ENCODE measurements at regions of chr1 and their contacts with region 1.

Region 1: DNA sequence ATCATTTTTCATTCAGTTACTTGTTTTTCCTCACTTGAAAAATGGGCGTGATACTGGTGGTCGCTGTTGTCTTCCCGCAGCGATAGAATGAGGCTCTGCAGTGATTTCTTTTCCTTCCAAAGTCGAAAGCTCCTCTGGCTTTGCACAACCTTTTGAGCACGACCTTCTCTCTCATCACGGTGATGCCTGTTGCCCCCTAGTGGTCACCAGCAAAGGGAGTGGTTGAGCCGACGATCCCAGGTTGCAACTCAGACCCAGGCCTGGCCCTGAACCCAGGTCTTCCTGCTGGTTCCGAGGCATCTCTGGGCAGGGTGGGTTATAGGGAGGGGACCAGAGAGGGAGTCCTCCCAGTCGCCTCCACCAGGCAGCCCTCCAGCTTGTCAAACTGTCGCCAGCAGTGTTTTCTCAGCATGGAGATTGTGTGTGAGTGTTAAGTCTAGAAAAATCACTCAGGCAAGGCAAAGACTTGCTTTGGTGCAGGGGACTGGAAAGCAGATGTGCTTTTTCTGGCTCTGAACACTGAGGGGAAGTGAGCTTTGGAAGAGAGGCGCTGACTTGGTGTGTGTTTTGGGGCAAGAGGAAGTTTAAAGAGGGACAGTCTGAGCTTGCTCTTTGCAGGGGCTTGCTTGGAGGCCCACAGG is 285.3 kb downstream of the CAMTA1 start:
- DNase-seq: peak; percentile 42 to 66
- ATAC-seq: peak; percentile 71 to 92 (median 84)
- H3K4me3 ChIP-seq: peak overlapping the region in 9 of 10 donors; percentile 17 to 53 (median 42)
- H3K27ac ChIP-seq: no peak overlapping the region
- H3K4me1 ChIP-seq: peaks cover 0 to 9% (median 7%) of the 10 kb centered on the region in 9 donors
- H3K27me3 ChIP-seq: peaks cover 0 to 11% (median 0%) of the 10 kb centered on the region in 7 donors
- CTCF ChIP-seq: peak; percentile 70 to 90 (median 84)

Region 2: DNA sequence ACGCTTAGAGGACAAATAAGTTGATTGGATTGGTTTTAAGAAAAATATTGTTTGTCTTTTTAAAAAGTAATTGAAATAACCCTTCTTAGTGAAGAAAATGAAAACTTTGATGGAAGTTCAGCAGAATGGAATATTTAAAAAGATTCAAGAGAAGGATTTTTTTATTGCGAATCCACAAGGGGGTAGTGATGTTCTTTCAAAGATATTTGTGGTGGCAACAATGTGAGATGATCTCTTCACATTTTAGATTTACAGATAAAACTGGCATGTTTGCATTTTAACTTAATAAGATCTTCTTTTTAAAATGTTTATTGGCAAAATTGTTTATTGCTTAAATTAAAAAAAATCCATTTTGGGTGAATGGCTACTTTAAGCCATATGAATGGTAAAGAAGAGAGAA is 276.3 kb before region 1 on chr1:
- intact Hi-C with region 1: loop called in 7 of 10 experiments (anchors 2 to 10 kb)
- DNase-seq: no peak
- ATAC-seq: no peak
- H3K4me3 ChIP-seq: no peak overlapping the region
- H3K27ac ChIP-seq: no peak overlapping the region
- H3K4me1 ChIP-seq: peaks cover 0 to 77% (median 55%) of the 10 kb centered on the region in 9 donors
- H3K27me3 ChIP-seq: no peaks in the 10 kb centered on the region
- CTCF ChIP-seq: peak in 7 of 9 donors; percentile 36 to 65 (median 58)

Region 3: GRCh38 chr1:6889875-6890480 is 180.5 kb before region 1 on chr1:
- intact Hi-C with region 1: loop called in 1 of 10 experiments (anchors 10 kb)
- DNase-seq: peak in 1 of 2 donors; percentile 40
- ATAC-seq: peak in 7 of 8 donors; percentile 61 to 84 (median 73)
- H3K4me3 ChIP-seq: no peak overlapping the region
- H3K27ac ChIP-seq: no peak overlapping the region
- H3K4me1 ChIP-seq: peaks cover 0 to 9% (median 6%) of the 10 kb centered on the region in 9 donors
- H3K27me3 ChIP-seq: no peaks in the 10 kb centered on the region
- CTCF ChIP-seq: peak; percentile 55 to 90 (median 82)

Region 4: DNA sequence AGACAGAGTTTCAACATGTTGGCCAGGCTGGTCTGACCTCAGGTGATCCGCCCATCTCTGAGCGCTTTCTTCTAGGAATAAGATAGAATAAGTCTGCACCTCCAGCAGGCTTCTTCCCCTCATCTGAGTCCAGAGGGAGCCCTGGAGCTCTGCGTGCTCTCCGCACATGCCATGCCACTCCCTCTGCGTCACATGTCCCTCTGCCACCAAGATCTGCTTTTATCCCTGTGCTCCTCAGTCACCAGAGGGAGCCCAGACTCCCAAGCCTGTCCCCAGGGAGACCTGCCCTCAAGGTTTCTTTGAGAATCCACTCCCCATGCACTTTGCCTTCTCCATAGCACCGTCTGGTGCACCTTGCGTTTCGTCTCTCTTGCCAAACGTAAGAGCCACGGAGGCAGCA is 72.2 kb before region 1 on chr1:
- intact Hi-C with region 1: loop called in 2 of 10 experiments (anchors 5 to 10 kb)
- DNase-seq: peak in 1 of 2 donors; percentile 14
- ATAC-seq: peak in 7 of 8 donors; percentile 61 to 91 (median 79)
- H3K4me3 ChIP-seq: no peak overlapping the region
- H3K27ac ChIP-seq: no peak overlapping the region
- H3K4me1 ChIP-seq: no peaks in the 10 kb centered on the region
- H3K27me3 ChIP-seq: no peaks in the 10 kb centered on the region
- CTCF ChIP-seq: peak in 7 of 9 donors; percentile 26 to 59 (median 43)

Measured in heart right ventricle (tissue), 16 donors.